Activated naive CD4-positive, alpha-beta T cell treated with anti-CD3 and anti-CD28 coated beads for 36 hours (primary cell): ENCODE measurements at regions of chr3 and their contacts with region 1.

Region 1: GRCh38 chr3:142613491-142613890 is 17.3 kb downstream of the PLS1 start:
- DNase-seq: no peak
- H3K4me3 Mint-ChIP-seq: no peak overlapping the region
- H3K27ac Mint-ChIP-seq: no peak overlapping the region
- H3K4me1 Mint-ChIP-seq: no peaks in the 10 kb centered on the region
- H3K27me3 Mint-ChIP-seq: no peaks in the 10 kb centered on the region

Region 2: GRCh38 chr3:142787719-142788118 is 174.2 kb after region 1 on chr3:
- CTCF ChIA-PET with region 1: no interaction called
- intact Hi-C with region 1: loop called (anchors 5 kb)
- DNase-seq: no peak
- H3K4me3 Mint-ChIP-seq: no peak overlapping the region
- H3K27ac Mint-ChIP-seq: no peak overlapping the region
- H3K4me1 Mint-ChIP-seq: no peaks in the 10 kb centered on the region
- H3K27me3 Mint-ChIP-seq: no peaks in the 10 kb centered on the region